Mammary epithelial cell (primary cell): ENCODE measurements at regions of chrX and their contacts with region 1.

Region 1: DNA sequence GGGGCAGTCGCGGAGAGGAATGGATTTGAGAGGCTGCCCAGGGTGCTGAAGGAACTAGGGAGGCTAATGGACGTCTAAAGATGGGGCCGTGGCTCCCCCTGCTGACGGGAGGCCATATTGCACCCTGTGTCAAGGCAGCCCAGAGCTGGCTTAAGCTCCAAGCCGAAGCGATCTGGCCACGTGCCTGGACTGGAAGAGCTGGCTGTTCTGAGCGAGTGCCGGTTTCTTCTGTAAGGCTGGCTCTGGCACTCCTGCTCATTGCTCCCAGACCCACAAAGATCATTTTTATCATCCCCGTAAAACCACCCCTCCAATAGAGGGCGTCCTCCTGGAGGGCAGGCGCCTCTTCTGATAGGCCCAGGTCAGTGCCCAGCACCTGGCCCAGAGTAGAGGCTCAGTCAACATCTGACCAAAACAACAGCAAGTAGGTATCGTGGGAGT is 5.6 kb downstream of the PNCK start:
- DNase-seq: peak; percentile 60
- H3K4me3 ChIP-seq: peak overlapping the region in 2 of 3 experiments; percentile 7 to 38
- H3K27ac ChIP-seq: no peak overlapping the region
- H3K4me1 ChIP-seq: no peaks in the 10 kb centered on the region
- H3K27me3 ChIP-seq: no peaks in the 10 kb centered on the region
- CTCF ChIP-seq: peak; percentile 56 to 76

Region 2: DNA sequence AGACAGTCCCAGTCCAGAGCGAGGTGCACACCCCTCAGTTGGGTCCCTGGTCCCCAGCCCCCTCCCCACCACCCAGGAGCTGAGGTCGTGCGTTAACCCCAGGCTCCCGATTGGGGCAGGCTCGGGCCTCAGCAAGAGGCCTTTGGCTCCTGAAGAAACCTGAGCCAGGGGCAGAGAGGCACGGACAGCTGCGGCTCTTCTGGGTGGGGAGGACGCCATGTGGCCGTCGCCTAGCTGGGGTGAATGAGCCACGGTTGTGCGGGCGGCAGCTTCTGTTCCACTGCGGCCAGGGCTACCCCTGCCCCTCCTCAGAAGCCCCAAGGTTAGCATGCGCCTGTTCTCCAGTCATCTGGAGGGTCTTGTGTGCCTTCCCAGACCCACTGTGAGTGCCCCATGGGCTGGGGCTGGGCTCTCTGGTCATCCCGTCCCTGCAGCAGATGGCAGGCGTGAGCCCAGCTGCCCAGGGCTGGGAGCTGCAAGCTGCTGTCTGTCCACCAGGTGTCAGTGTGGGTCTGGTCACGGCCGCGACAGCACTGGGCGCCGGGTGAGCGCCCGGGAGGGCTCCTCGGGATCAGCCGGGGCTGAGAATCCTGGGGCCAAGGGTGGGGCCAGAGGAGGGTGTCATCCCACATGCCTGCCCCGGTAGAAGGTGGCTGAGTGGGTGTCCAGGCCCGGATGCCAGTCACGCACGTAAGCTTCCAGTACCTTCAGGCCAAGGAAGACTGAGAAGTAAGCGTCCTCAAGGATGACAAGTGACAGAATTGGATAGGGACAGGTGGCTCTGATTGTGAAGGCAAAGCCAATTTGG is 128.6 kb before region 1 on chrX:
- CTCF ChIA-PET with region 1: no interaction called
- dilution Hi-C with region 1: no loop called
- in situ Hi-C with region 1: no loop called
- intact Hi-C with region 1: loop called (anchors 2 kb)
- DNase-seq: peak; percentile 30
- H3K4me3 ChIP-seq: no peak overlapping the region
- H3K27ac ChIP-seq: no peak overlapping the region
- H3K4me1 ChIP-seq: no peaks in the 10 kb centered on the region
- H3K27me3 ChIP-seq: no peaks in the 10 kb centered on the region
- CTCF ChIP-seq: peak; percentile 56 to 89

Region 3: DNA sequence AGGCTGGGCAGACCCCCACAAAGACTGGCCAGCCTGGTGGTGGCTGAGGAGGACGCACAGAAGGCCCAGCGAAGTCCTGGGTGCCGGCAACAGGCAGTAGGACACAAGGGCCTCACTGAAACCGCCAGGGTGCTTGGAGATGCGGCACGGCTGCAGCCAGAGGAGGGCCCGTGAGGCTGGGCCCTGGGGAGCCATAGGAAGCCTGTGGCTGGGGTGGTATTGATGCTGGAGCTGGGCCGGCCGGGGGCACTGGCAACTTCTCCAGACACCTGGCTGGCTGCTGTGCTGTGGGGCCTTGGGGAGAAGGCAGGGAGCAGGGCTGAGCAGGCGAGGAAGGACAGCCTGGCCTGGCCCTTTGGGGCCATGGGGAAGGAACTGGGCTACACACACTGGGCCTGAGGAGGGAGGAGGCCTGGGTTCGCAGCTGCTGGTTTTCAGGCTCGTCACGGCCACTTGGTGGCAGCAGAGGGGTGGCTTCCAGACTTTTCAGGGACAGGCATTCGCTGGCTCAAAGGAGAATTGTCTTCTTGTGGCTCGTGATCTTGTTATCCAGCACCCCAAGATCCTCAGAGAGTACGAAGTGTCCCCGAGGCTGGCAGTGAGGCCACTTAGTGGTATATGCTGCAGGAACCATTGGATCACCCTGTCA is 113.3 kb before region 1 on chrX:
- CTCF ChIA-PET with region 1: no interaction called
- dilution Hi-C with region 1: no loop called
- in situ Hi-C with region 1: loop called in 1 of 2 experiments (anchors 5 kb)
- intact Hi-C with region 1: loop called (anchors 2 kb)
- DNase-seq: peak; percentile 27
- H3K4me3 ChIP-seq: no peak overlapping the region
- H3K27ac ChIP-seq: no peak overlapping the region
- H3K4me1 ChIP-seq: no peaks in the 10 kb centered on the region
- H3K27me3 ChIP-seq: peaks cover 3% of the 10 kb centered on the region
- CTCF ChIP-seq: peak; percentile 48 to 72

Region 4: DNA sequence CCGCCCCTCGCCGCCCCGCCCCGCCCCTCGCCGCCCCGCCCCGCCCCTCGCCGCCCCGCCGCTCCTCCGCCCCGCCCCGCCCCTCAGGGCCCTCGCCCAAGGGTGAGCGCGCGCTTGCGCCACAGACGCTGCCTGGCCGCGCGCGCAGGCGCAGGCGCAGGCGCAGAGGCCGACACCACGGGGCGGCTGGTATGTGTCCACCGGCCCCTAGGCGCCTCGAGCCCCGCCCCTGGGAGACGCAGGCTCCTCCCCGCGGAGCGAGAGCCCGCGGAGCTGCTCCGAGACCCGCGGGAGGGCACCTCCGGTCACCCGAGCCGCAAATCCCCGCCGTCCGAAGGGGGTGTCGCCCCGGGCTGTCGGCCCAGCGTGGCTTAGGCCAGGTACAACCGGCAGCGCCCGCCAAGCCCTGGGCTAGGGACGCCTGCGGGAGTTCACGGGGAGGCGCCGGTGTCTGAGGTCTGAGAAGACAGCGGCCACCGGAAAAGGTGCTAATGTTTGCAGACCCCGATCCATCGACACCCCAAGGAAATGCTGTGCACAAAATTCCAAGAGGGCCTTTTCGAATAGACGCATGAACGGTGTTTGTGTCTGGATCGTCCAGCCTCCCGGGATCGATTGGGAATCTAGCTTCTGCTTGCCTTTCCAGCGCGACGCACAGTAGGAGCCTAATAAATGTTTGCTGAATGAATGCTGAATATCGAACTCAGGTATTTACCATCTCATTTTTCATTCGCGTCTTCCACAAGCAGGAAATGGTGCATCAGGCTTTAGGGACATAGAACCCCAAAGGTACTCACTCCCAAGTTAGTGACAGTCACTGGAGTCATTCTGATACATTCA is 68.6 kb before region 1 on chrX:
- CTCF ChIA-PET with region 1: no interaction called
- dilution Hi-C with region 1: no loop called
- in situ Hi-C with region 1: loop called in 1 of 2 experiments (anchors 10 kb)
- intact Hi-C with region 1: no loop called
- DNase-seq: peak; percentile 81
- H3K4me3 ChIP-seq: peak overlapping the region; percentile 61 to 67 (median 64)
- H3K27ac ChIP-seq: peak overlapping the region; percentile 48
- H3K4me1 ChIP-seq: peaks cover 7% of the 10 kb centered on the region
- H3K27me3 ChIP-seq: no peaks in the 10 kb centered on the region
- CTCF ChIP-seq: no peak

Region 5: DNA sequence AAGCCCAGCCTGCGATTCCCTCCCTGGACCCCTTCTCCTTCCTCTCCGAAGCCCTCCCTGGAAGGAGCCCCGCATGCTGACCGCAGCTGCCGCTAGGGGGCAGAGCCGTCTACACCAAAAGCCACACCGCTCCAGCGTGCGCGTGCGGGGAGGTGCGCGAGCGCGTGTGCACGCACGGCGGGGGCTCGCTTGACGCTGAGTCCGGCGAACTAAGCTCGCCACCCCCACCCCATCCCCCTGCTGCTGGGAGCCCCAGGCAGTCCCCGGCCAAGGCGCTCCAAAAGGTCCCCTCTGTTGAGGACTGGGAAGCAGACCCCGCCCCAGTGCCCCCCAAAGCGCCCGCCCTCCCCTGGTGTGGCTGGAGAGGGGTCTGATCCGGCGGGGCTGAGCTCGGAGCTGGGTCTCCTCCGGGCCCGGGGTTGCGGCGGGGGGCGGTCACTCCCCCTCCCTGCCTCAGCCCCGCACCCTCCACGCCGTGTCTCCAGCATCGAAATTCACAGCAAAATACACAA is 58.0 kb before region 1 on chrX:
- CTCF ChIA-PET with region 1: interaction called, 3 read pairs
- dilution Hi-C with region 1: no loop called
- in situ Hi-C with region 1: loop called in 1 of 2 experiments (anchors 10 kb)
- intact Hi-C with region 1: loop called (anchors 1 kb)
- DNase-seq: peak; percentile 21
- H3K4me3 ChIP-seq: peak overlapping the region in 1 of 3 experiments; percentile 27
- H3K27ac ChIP-seq: no peak overlapping the region
- H3K4me1 ChIP-seq: peaks cover 4% of the 10 kb centered on the region
- H3K27me3 ChIP-seq: no peaks in the 10 kb centered on the region
- CTCF ChIP-seq: peak; percentile 48 to 75